H1 (cell line): ENCODE measurements at regions of chr17 and their contacts with region 1.

Region 1: DNA sequence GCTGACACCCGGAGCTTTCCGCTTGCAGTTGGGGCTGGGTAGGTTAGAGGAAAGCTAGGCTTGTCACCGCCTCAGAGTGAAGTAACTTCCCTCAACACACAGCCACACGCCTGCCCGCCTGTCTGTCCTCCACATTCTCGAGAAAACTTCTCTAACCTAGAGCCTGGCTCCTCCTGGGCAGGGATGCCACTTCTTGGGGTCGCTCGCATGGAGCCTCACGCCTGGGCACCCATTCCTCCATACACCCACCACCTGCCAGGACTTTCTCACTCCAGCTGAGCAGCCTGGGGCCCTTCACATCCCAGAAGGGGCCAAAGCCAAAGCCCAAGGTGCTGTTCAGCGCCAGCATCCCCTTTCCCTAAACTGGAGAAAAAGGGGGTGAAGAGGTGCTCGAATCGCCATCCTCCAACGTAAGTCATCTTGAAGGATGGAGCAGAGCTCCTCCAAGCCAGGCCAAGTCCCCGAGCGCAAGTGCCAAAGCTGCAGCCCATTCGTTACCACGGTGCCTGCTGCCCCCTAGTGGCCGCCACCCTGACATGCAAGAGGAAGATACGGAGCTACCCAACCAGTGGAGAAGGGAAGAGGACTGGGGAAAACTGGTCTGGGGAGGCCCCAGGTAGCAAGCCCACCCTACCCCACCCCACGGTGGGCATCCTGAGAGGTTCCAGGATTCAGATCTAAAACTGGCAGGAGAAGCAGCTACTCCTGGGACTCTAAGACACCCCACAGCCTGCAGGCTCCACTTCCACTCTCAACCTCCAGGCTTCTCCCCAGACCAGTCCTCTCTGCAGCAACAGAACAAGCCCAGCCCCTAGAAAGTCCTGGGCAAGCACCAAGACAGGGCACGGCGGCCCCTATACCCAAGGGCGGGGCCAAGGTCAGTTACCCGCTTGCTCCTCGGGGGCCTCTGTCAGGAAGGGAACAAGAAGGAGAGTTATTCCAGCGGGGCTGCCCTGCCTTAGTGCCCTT is 63.1 kb downstream of the MYO18A start:
- DNase-seq: peak; percentile 57 to 97
- H3K4me3 ChIP-seq: no peak overlapping the region
- H3K27ac ChIP-seq: no peak overlapping the region
- H3K4me1 ChIP-seq: peaks cover 0 to 11% (median 8%) of the 10 kb centered on the region in 4 experiments; a peak in 6 of 7 replicates
- H3K27me3 ChIP-seq: no peaks in the 10 kb centered on the region
- CTCF ChIP-seq: peak; percentile 97 to 99 (median 99)
- EP300 ChIP-seq: no peak
- POLR2A ChIP-seq: no peak
- RAD21 ChIP-seq: peak; percentile 92 to 94

Region 2: GRCh38 chr17:28916302-28916934 is 200.7 kb before region 1 on chr17:
- CTCF ChIA-PET with region 1: interaction called, 30 read pairs
- POLR2A ChIA-PET with region 1: no interaction called
- DNase-seq: no peak
- H3K4me3 ChIP-seq: no peak overlapping the region
- H3K27ac ChIP-seq: no peak overlapping the region
- H3K4me1 ChIP-seq: no peaks in the 10 kb centered on the region; a peak in 2 of 7 replicates
- H3K27me3 ChIP-seq: no peaks in the 10 kb centered on the region
- CTCF ChIP-seq: peak; percentile 30 to 61 (median 47)
- EP300 ChIP-seq: no peak
- POLR2A ChIP-seq: no peak
- RAD21 ChIP-seq: peak; percentile 33 to 51; a peak in 3 of 4 replicates

Region 3: GRCh38 chr17:28937044-28937729 is 179.9 kb before region 1 on chr17:
- CTCF ChIA-PET with region 1: interaction called, 10 read pairs
- POLR2A ChIA-PET with region 1: no interaction called
- DNase-seq: no peak
- H3K4me3 ChIP-seq: no peak overlapping the region
- H3K27ac ChIP-seq: no peak overlapping the region
- H3K4me1 ChIP-seq: peaks cover 2 to 22% (median 16%) of the 10 kb centered on the region in 4 experiments; a peak in 5 of 7 replicates
- H3K27me3 ChIP-seq: no peaks in the 10 kb centered on the region
- CTCF ChIP-seq: no peak
- EP300 ChIP-seq: no peak
- POLR2A ChIP-seq: no peak
- RAD21 ChIP-seq: no peak

Region 4: GRCh38 chr17:28982131-28982951 is 134.7 kb before region 1 on chr17:
- CTCF ChIA-PET with region 1: interaction called, 23 read pairs
- POLR2A ChIA-PET with region 1: no interaction called
- DNase-seq: no peak
- H3K4me3 ChIP-seq: no peak overlapping the region
- H3K27ac ChIP-seq: no peak overlapping the region
- H3K4me1 ChIP-seq: peaks cover 14 to 18% (median 16%) of the 10 kb centered on the region in 4 experiments
- H3K27me3 ChIP-seq: no peaks in the 10 kb centered on the region
- CTCF ChIP-seq: no peak
- EP300 ChIP-seq: no peak
- POLR2A ChIP-seq: no peak
- RAD21 ChIP-seq: no peak

Region 5: GRCh38 chr17:29032857-29033197 is 84.3 kb before region 1 on chr17:
- CTCF ChIA-PET with region 1: interaction called, 41 read pairs
- POLR2A ChIA-PET with region 1: interaction called, 13 read pairs
- DNase-seq: no peak
- H3K4me3 ChIP-seq: peak overlapping the region in 2 of 4 experiments; percentile 32 to 47; a peak in 3 of 8 replicates
- H3K27ac ChIP-seq: peak overlapping the region; percentile 72; the same call in 1 of the 2 replicates
- H3K4me1 ChIP-seq: peaks cover 11 to 31% (median 22%) of the 10 kb centered on the region in 4 experiments
- H3K27me3 ChIP-seq: no peaks in the 10 kb centered on the region
- CTCF ChIP-seq: no peak
- EP300 ChIP-seq: peak in 1 of 2 experiments; percentile 64; a peak in 1 of 3 replicates
- POLR2A ChIP-seq: no peak; a peak in 1 of 3 replicates
- RAD21 ChIP-seq: no peak

Region 6: DNA sequence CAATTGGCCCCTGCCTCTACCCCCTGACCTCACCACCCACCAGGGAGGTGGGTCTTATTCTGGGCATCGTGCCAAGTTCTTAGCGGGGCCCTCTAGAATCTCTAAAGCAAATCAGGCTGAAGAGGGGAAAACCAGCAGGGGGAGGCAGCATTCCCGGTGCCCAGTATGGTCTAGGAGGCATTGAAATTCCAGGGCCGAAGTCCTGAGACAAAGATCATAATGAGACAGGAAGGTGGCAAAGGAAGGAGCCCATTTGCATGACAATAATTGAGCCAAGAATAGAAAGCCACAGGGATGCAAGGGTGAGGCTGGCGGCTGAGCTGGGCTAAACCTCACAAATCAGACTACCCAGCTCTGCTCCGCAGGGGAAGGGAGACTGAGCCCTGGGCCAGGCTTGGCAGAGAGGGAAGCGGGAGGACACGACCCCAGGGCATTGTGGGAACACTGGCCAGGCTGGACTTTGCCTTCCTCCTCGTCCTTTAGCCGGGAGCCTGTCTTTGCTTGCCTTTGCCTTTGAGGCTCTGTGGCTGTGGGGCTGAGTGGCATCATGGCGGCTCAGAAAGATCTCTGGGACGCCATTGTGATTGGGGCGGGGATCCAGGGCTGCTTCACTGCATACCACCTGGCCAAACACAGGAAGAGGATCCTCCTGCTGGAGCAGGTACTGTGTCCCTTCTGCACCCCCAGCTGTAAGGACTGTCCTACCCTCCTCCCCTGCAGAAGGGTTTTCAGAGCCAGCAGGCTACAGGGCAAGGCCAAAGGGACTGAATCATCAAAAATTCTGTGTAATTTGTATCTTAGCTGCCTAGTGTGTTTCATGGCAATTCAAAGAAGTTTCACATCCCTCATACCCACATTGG is 74.2 kb before region 1 on chr17 and contains the start of gene PIPOX:
- CTCF ChIA-PET with region 1: interaction called, 23 read pairs
- POLR2A ChIA-PET with region 1: interaction called, 3 read pairs
- DNase-seq: peak; percentile 81 to 94
- H3K4me3 ChIP-seq: peak within 1 kb of the TSS in 3 of 4 experiments; percentile 0 to 25 (median 15); a peak in 3 of 8 replicates
- H3K27ac ChIP-seq: peak within 1 kb of the TSS; percentile 92
- H3K4me1 ChIP-seq: peaks cover 14 to 27% (median 20%) of the 10 kb centered on the region in 4 experiments
- H3K27me3 ChIP-seq: no peaks in the 10 kb centered on the region
- CTCF ChIP-seq: peak; percentile 26 to 54 (median 45)
- EP300 ChIP-seq: peak in 1 of 2 experiments; percentile 85; a peak in 1 of 3 replicates
- POLR2A ChIP-seq: peak; percentile 60 to 89
- RAD21 ChIP-seq: peak in 1 of 2 experiments; percentile 63; a peak in 2 of 4 replicates
- total RNA-seq, gene PIPOX: 55.5 and 57.2 TPM in 2 replicates

Region 7: DNA sequence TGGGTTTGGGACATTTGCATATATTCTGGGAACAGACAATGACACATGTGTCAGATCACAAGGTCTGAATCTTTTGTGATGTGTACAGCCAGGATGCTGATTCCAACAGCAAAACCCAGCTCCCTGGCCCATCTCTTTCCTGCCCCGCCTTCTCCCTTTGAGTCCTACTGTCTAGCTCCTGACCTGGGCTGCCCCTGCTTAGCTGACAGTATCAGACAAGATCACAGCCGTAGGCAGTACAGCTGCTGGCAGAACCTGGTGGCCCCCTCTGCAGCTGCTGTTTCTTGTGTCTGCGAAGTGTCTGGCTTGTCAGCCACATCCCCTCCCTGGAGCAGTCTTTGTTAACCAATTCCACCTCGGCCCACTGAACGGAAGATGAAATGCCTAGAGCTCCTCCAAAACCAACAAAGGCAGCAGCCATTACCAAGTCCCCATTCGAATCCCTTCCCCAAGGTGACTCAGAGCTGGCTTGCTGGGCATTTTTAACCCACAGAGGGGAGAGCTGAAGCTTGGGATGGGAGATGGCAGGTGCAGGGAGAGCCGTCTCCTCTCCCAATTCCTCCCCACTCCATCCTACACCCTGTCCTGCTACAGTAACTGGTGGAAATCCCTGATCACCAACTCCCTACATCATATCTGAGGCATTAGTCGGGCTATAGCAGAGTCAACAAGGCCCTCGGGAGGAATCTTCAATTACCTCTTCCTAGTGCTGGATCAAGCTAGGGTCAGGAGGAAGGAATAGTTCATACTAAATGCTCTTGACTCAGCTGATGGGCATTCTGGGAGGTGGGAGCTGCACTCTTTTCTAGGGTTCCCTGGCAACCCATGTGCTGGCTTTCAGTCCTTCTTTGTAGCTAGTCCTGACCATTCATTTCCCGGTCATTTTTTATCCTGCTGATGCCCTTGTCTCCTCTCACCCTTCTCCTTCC is 68.4 kb before region 1 on chr17:
- CTCF ChIA-PET with region 1: interaction called, 23 read pairs
- POLR2A ChIA-PET with region 1: no interaction called
- DNase-seq: no peak
- H3K4me3 ChIP-seq: no peak overlapping the region
- H3K27ac ChIP-seq: no peak overlapping the region
- H3K4me1 ChIP-seq: peaks cover 3 to 14% (median 8%) of the 10 kb centered on the region in 4 experiments
- H3K27me3 ChIP-seq: no peaks in the 10 kb centered on the region
- CTCF ChIP-seq: no peak
- EP300 ChIP-seq: no peak
- POLR2A ChIP-seq: no peak
- RAD21 ChIP-seq: no peak

Region 8: GRCh38 chr17:29084541-29085146 is 32.4 kb before region 1 on chr17:
- CTCF ChIA-PET with region 1: no interaction called
- POLR2A ChIA-PET with region 1: no interaction called
- DNase-seq: no peak
- H3K4me3 ChIP-seq: peak overlapping the region in 1 of 4 experiments; percentile 23; a peak in 1 of 8 replicates
- H3K27ac ChIP-seq: no peak overlapping the region
- H3K4me1 ChIP-seq: peaks cover 12 to 36% (median 17%) of the 10 kb centered on the region in 4 experiments
- H3K27me3 ChIP-seq: no peaks in the 10 kb centered on the region; a peak in 1 of 7 replicates
- CTCF ChIP-seq: no peak
- EP300 ChIP-seq: no peak
- POLR2A ChIP-seq: no peak
- RAD21 ChIP-seq: no peak; a peak in 1 of 4 replicates

Region 9: DNA sequence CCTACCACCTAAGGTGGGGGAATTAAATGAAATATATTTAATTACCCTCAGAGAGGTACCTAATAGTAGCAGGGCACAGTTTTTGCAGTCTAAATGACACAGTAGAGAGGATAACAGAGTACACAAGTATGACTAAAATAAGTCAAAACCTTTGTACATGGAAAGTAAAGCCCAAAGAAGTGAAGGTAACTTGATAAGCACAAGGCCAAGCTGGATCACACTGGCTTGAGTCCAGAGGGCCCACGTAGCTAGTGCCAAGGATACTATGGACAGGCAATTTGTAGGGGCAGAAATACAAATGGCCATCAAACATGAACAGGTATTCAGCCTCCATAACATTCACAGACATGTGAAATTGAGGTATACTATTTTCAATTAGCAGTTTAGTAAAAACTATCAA is 55.5 kb after region 1 on chr17:
- CTCF ChIA-PET with region 1: no interaction called
- POLR2A ChIA-PET with region 1: no interaction called
- DNase-seq: no peak
- H3K4me3 ChIP-seq: no peak overlapping the region
- H3K27ac ChIP-seq: no peak overlapping the region
- H3K4me1 ChIP-seq: peaks cover 0 to 10% (median 4%) of the 10 kb centered on the region in 4 experiments; a peak in 5 of 7 replicates
- H3K27me3 ChIP-seq: no peaks in the 10 kb centered on the region
- CTCF ChIP-seq: no peak
- EP300 ChIP-seq: no peak
- POLR2A ChIP-seq: no peak
- RAD21 ChIP-seq: no peak